Activated naive CD4-positive, alpha-beta T cell treated with anti-CD3 and anti-CD28 coated beads for 36 hours (primary cell): ENCODE measurements at regions of chr5 and their contacts with region 1.

Region 1: GRCh38 chr5:16626663-16627264 is 10.0 kb upstream of the RETREG1 start:
- DNase-seq: peak; percentile 66
- H3K4me3 Mint-ChIP-seq: no peak overlapping the region
- H3K27ac Mint-ChIP-seq: peak overlapping the region; percentile 77
- H3K4me1 Mint-ChIP-seq: peaks cover 46% of the 10 kb centered on the region
- H3K27me3 Mint-ChIP-seq: no peaks in the 10 kb centered on the region

Region 2: GRCh38 chr5:16169550-16169949 is 457.2 kb before region 1 on chr5:
- CTCF ChIA-PET with region 1: no interaction called
- intact Hi-C with region 1: no loop called
- DNase-seq: no peak
- H3K4me3 Mint-ChIP-seq: no peak overlapping the region
- H3K27ac Mint-ChIP-seq: no peak overlapping the region
- H3K4me1 Mint-ChIP-seq: no peaks in the 10 kb centered on the region
- H3K27me3 Mint-ChIP-seq: peaks cover 8% of the 10 kb centered on the region

Region 3: GRCh38 chr5:16245249-16245648 is 381.5 kb before region 1 on chr5:
- CTCF ChIA-PET with region 1: no interaction called
- intact Hi-C with region 1: no loop called
- DNase-seq: no peak
- H3K4me3 Mint-ChIP-seq: no peak overlapping the region
- H3K27ac Mint-ChIP-seq: no peak overlapping the region
- H3K4me1 Mint-ChIP-seq: no peaks in the 10 kb centered on the region
- H3K27me3 Mint-ChIP-seq: no peaks in the 10 kb centered on the region

Region 4: GRCh38 chr5:16656561-16657191 is 29.9 kb after region 1 on chr5:
- CTCF ChIA-PET with region 1: no interaction called
- intact Hi-C with region 1: loop called (anchors 1 kb)
- DNase-seq: no peak
- H3K4me3 Mint-ChIP-seq: no peak overlapping the region
- H3K27ac Mint-ChIP-seq: no peak overlapping the region
- H3K4me1 Mint-ChIP-seq: peaks cover 16% of the 10 kb centered on the region
- H3K27me3 Mint-ChIP-seq: no peaks in the 10 kb centered on the region

Region 5: DNA sequence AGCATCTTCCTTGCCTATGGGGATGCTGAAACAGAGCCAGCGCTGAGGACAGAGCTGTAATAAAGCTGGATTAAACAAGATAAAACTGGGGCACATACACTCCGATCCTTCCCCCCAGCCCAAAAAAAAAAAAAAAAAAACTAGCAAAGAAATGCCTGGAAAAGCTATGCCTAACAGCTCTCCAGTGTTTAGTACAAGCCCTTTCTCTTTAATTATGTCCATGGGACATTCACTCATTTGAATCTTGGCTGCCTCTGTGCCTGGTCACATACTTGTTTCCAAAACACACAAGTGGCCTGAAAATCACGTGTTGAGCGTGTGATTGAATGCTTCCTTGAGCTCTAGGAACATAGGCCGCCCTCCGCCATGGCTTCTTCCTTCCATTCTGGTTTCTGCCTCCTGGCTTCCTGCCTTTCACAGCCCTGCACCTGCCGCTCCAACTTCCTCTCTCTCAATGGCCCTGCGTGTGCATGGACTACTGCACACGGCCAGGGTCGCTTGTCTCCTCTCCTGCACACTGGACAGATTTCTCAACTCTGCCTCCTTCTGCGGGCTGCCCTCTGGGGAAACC is 101.1 kb after region 1 on chr5:
- CTCF ChIA-PET with region 1: interaction called, 4 read pairs
- intact Hi-C with region 1: loop called (anchors 5 kb)
- DNase-seq: no peak
- H3K4me3 Mint-ChIP-seq: no peak overlapping the region
- H3K27ac Mint-ChIP-seq: no peak overlapping the region
- H3K4me1 Mint-ChIP-seq: peaks cover 12% of the 10 kb centered on the region
- H3K27me3 Mint-ChIP-seq: peaks cover 2% of the 10 kb centered on the region